ENCODE measurements at regions of chr9 and their contacts with region 1.

Region 1: GRCh38 chr9:113737517-113738271 is 138.4 kb upstream of the ZNF618 start:
- DNase-seq: peak; percentile 46
- ATAC-seq: peak; percentile 78
- H3K4me3 ChIP-seq: no peak overlapping the region
- H3K27ac ChIP-seq: no peak overlapping the region
- H3K4me1 ChIP-seq: no peaks in the 10 kb centered on the region
- H3K27me3 ChIP-seq: peaks cover 0 to 10% of the 10 kb centered on the region in 2 experiments; a peak in 1 of 5 replicates
- CTCF ChIP-seq: peak; percentile 77
- EP300 ChIP-seq: no peak
- POLR2A ChIP-seq: no peak
- RAD21 ChIP-seq: peak; percentile 49; the same call in 1 of the 2 replicates

Region 2: DNA sequence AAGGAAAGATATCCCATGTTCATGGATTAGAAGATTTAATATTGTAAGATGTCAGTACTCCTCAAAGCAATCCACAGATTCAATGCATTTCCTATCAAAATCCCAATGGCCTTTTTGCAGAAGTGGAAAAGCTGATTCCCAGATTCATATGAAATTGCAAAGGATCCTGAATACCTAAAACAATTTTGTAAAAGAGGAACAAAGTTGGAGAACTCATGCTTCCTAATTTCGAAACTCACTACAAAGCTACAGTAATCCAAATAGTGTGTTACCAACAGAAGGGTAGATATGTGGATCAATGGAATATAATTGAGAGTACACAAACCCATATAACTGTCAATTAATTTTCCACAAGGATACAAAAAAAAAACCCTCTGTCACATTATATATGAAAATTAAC is 15.8 kb before region 1 on chr9:
- CTCF ChIA-PET with region 1: no interaction called
- POLR2A ChIA-PET with region 1: no interaction called
- in situ Hi-C with region 1: no loop called
- intact Hi-C with region 1: no loop called
- DNase-seq: no peak
- ATAC-seq: no peak
- H3K4me3 ChIP-seq: no peak overlapping the region
- H3K27ac ChIP-seq: no peak overlapping the region
- H3K4me1 ChIP-seq: no peaks in the 10 kb centered on the region
- H3K27me3 ChIP-seq: peaks cover 1 to 6% of the 10 kb centered on the region in 2 experiments; a peak in 2 of 5 replicates
- CTCF ChIP-seq: no peak
- EP300 ChIP-seq: no peak
- POLR2A ChIP-seq: no peak
- RAD21 ChIP-seq: no peak

Region 3: DNA sequence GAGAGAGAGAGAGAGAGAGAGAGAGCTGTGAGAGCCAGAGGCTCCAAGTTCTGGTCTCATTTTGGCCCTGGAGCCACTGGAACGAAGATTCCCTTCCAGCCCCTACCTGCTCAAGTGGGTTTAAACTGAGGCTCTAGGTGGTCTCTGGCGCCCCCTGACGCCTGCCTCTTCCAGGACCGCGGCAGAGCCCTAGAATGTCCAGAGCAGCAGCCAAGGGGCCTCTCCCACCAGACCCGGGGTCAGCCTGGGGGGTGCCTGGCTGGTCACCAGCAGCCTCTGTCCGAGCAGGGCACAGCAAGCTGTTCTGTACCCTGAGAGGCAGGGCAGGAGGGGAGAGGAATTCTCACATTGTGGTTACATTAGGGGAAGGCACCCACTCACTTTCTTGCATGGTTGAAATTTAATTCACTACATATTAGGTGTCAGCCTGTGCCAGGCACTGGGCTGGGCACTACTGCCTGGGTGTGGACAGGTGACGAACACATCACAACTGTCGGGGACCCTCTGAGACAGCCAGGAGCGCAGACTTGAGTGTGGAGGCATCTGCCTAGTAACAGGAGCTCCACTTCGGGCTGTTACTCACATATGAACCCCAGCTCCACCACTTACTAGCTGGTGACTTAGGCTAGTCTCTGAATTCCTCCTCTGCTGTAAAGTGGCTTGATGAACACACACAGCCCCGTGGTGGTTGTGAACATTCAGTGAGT is 295.9 kb after region 1 on chr9:
- CTCF ChIA-PET with region 1: interaction called, 3 read pairs
- POLR2A ChIA-PET with region 1: no interaction called
- in situ Hi-C with region 1: loop called (anchors 25 kb)
- intact Hi-C with region 1: no loop called
- DNase-seq: peak; percentile 13
- ATAC-seq: peak; percentile 81
- H3K4me3 ChIP-seq: no peak overlapping the region
- H3K27ac ChIP-seq: no peak overlapping the region
- H3K4me1 ChIP-seq: no peaks in the 10 kb centered on the region
- H3K27me3 ChIP-seq: peaks cover 1 to 38% of the 10 kb centered on the region in 2 experiments; a peak in 4 of 5 replicates
- CTCF ChIP-seq: peak; percentile 80
- EP300 ChIP-seq: no peak
- POLR2A ChIP-seq: no peak
- RAD21 ChIP-seq: peak; percentile 54

Measured in HepG2 (cell line).